PC-3 (cell line): ENCODE measurements at regions of chr13 and their contacts with region 1.

Region 1: GRCh38 chr13:77751513-77752456 is 54.3 kb downstream of the SLAIN1 start:
- DNase-seq: peak; percentile 66
- ATAC-seq: peak; percentile 56; the same call in 1 of the 2 replicates
- H3K4me3 ChIP-seq: no peak overlapping the region
- H3K27ac ChIP-seq: no peak overlapping the region
- H3K4me1 ChIP-seq: no peaks in the 10 kb centered on the region
- H3K27me3 ChIP-seq: no peaks in the 10 kb centered on the region
- CTCF ChIP-seq: peak; percentile 82

Region 2: DNA sequence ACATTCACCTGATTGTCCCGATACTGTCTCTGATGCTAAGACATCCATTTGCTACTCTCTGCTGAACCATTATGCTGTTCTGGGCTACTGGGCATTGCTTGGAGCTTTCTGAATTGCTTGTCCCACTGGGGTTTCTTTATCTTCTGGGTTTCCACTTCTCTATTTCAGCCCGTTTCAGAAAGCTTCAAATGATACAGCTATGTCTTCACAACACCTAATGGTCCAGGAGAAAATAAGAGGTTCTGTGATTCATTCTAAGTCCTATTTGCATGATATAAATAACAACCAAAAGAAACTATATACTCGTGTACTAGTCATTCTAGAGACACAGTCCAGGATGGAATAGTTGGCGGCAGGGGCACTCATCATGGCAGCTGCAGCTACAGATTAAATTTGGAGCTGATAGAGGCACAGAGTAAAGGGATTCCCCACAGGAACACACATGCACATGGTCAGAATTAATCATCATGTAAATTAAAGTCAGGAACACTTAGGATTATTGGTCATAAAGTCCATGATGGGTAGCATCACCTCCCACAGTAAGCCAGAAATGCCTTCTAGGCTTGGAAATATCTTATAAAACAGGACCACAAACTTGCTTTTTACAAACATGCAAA is 249.6 kb before region 1 on chr13:
- CTCF ChIA-PET with region 1: no interaction called
- POLR2A ChIA-PET with region 1: no interaction called
- intact Hi-C with region 1: no loop called
- DNase-seq: no peak
- ATAC-seq: no peak
- H3K4me3 ChIP-seq: no peak overlapping the region
- H3K27ac ChIP-seq: no peak overlapping the region
- H3K4me1 ChIP-seq: peaks cover 7% of the 10 kb centered on the region; the same call in 1 of the 2 replicates
- H3K27me3 ChIP-seq: no peaks in the 10 kb centered on the region
- CTCF ChIP-seq: no peak

Region 3: DNA sequence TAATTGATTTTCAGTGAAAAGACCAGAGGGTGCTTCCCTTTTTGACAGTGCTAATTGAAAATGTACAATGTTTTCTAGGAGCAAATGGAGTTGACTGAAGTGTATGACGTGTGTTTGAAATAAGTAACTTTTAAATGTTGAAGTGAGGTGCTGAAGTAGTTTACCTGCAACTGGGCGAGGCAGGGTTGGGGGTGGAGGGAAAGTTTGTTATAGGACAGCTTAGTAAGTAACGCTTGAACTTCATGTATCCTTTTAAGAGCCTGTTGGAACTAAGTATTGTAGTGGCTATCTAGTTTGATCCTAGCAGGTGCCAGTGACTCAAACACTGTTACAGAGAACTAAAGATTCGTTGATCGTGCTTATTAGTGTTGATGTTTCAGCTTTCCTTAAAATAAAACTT is 48.4 kb before region 1 on chr13:
- CTCF ChIA-PET with region 1: no interaction called
- POLR2A ChIA-PET with region 1: no interaction called
- intact Hi-C with region 1: loop called (anchors 5 kb)
- DNase-seq: no peak
- ATAC-seq: no peak
- H3K4me3 ChIP-seq: no peak overlapping the region
- H3K27ac ChIP-seq: no peak overlapping the region
- H3K4me1 ChIP-seq: peaks cover 16% of the 10 kb centered on the region
- H3K27me3 ChIP-seq: no peaks in the 10 kb centered on the region
- CTCF ChIP-seq: no peak